Common myeloid progenitor, CD34-positive (primary cell): ENCODE measurements at regions of chr1 and their contacts with region 1.

Region 1: GRCh38 chr1:185170291-185170848 is 13.4 kb downstream of the SWT1 start:
- DNase-seq: peak; percentile 76 to 89 (median 87)
- H3K4me3 ChIP-seq: peak overlapping the region in 4 of 7 experiments; percentile 4 to 55 (median 44)
- H3K27ac ChIP-seq: no peak overlapping the region
- H3K4me1 ChIP-seq: peaks cover 6 to 10% (median 9%) of the 10 kb centered on the region in 4 experiments
- H3K27me3 ChIP-seq: no peaks in the 10 kb centered on the region

Region 2: DNA sequence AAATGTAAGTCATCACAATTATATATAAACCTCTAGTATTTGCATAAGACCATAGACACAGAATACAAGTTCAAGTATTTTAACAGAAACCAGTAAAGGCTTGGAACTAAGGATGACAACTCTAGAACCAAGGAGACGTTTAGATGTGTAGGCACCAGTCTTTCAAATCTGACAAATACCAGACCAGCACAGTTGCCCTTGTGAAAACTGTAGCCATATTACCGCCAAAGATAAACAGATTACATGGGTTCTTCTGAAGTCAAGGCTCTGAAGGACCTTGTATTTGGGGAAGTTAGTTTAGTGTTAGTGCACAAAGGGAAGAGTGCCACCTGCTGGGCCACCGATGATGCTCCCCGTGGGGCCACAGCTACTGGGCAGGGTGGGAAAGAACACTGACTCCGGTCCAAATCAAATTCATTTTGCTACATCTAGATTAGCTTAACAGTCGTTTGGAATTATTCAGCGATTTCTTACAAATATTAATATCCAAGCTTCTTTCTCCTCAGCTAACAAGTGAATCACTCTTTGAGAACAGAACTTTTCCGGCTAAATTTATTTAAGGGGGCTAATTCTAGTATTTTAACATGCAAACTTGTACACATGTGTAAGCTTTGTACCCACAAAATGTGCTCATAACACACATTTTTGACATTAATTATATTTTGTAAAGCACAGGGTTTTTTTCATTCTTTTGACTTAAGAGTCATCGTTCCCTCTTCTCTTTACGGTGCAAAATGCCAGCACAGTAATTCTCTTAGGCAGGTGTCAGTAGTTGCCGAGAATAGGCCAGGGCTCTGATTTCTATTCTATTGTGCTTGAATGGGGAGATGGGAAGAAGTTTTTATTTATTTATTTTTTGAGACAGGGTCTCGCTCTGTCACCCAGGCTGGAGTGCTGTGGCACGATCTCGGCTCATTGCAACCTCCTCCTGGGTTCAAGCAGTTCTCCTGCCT is 188.1 kb before region 1 on chr1:
- CTCF ChIA-PET with region 1: interaction called, 64 read pairs
- POLR2A ChIA-PET with region 1: no interaction called
- DNase-seq: peak; percentile 81 to 93 (median 91)
- H3K4me3 ChIP-seq: peak overlapping the region in 1 of 7 experiments; percentile 14
- H3K27ac ChIP-seq: no peak overlapping the region
- H3K4me1 ChIP-seq: peaks cover 0 to 2% (median 0%) of the 10 kb centered on the region in 4 experiments
- H3K27me3 ChIP-seq: no peaks in the 10 kb centered on the region

Region 3: DNA sequence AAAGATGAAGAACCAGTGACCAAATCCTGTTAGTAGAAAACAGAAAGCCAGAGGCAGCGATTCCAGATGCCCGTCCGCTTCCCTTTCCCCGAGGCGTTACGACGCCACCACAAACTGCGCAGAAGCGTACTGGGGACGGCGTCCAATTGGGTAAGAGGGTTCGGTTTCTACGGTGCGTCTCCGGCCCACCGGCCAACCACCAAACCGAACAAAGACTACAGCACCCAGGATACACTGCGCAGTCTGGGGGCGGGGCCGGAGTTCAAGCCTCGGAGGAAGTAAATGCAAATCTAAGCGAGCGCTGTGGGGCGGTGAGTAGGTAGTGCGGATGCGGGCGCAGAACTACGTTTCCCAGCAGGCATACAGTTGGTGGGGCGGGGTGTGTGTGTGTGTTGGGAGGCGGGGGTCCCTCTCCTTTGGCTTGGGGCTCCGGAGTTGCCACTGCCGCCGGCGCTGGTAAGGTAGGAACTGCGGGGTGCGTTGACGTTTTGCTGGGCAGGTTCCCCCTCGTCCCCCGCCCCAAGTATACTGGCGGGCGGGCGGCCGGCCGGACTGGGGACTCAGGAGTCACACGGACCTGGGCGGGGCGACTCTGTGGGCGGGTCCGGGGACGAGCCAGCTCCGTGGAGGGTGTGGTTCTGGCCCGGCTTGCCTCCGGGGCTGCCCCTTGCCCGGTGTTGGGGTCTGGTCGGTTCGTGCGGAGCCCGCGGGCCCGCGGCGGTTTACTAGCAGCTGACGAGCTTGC is 13.3 kb before region 1 on chr1 and contains the starts of genes SWT1 and TRMT1L:
- CTCF ChIA-PET with region 1: interaction called, 59 read pairs
- POLR2A ChIA-PET with region 1: interaction called, 3 read pairs
- DNase-seq: peak; percentile 99 to 100 (median 100)
- H3K4me3 ChIP-seq: peak within 1 kb of the TSS; percentile 90 to 100 (median 97)
- H3K27ac ChIP-seq: peak within 1 kb of the TSS; percentile 97 to 99
- H3K4me1 ChIP-seq: peaks cover 25 to 44% (median 34%) of the 10 kb centered on the region in 4 experiments
- H3K27me3 ChIP-seq: no peaks in the 10 kb centered on the region